ENCODE measurements at regions of chr5 and their contacts with region 1.

Region 1: DNA sequence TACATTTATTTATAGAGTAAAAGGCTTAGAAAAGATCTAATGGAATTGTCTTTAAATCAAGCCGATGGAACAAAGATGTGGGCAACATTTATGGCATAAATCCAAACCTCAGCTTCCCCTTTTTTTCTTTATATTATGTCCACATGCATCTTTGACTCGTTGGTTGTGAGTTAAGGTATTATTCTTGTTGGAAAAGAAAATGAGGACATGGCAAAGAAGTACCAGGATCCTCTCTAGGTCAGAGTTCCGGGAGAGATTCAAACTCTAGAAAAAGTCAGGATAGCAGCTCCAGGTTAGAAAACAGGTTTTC is 508 bp upstream of the NME5 start:
- DNase-seq: no peak
- H3K4me3 ChIP-seq: peak overlapping the region in 1 of 2 donors; percentile 50
- H3K27ac ChIP-seq: no peak overlapping the region
- H3K4me1 ChIP-seq: peaks cover 0 to 11% (median 4%) of the 10 kb centered on the region in 4 donors
- H3K27me3 ChIP-seq: no peaks in the 10 kb centered on the region
- CTCF ChIP-seq: no peak

Region 2: GRCh38 chr5:136639616-136640015 is 1500.1 kb before region 1 on chr5:
- intact Hi-C with region 1: loop called (anchors 5 kb)
- DNase-seq: no peak
- H3K4me3 ChIP-seq: no peak overlapping the region
- H3K27ac ChIP-seq: no peak overlapping the region
- H3K4me1 ChIP-seq: no peaks in the 10 kb centered on the region
- H3K27me3 ChIP-seq: peaks cover 0 to 2% of the 10 kb centered on the region in 2 donors
- CTCF ChIP-seq: no peak